Calu3 (cell line): ENCODE measurements at regions of chr2 and their contacts with region 1.

Region 1: GRCh38 chr2:67322353-67323001 is 74.7 kb upstream of the ETAA1 start:
- DNase-seq: peak; percentile 73
- H3K4me3 Mint-ChIP-seq: peak overlapping the region; percentile 12
- H3K27ac Mint-ChIP-seq: peak overlapping the region; percentile 87
- H3K4me1 Mint-ChIP-seq: peaks cover 29% of the 10 kb centered on the region
- H3K27me3 Mint-ChIP-seq: no peaks in the 10 kb centered on the region
- CTCF ChIP-seq: peak; percentile 71

Region 2: GRCh38 chr2:66434679-66435548 is 887.6 kb before region 1 on chr2 and contains the start of gene MEIS1:
- CTCF ChIA-PET with region 1: no interaction called
- intact Hi-C with region 1: loop called (anchors 10 kb)
- DNase-seq: peak; percentile 89
- H3K4me3 Mint-ChIP-seq: peak within 1 kb of the TSS; percentile 74
- H3K27ac Mint-ChIP-seq: peak within 1 kb of the TSS; percentile 75
- H3K4me1 Mint-ChIP-seq: peaks cover 19% of the 10 kb centered on the region
- H3K27me3 Mint-ChIP-seq: no peaks in the 10 kb centered on the region
- CTCF ChIP-seq: no peak
- total RNA-seq, gene MEIS1: 8.1 and 11.5 TPM in 2 replicates

Region 3: DNA sequence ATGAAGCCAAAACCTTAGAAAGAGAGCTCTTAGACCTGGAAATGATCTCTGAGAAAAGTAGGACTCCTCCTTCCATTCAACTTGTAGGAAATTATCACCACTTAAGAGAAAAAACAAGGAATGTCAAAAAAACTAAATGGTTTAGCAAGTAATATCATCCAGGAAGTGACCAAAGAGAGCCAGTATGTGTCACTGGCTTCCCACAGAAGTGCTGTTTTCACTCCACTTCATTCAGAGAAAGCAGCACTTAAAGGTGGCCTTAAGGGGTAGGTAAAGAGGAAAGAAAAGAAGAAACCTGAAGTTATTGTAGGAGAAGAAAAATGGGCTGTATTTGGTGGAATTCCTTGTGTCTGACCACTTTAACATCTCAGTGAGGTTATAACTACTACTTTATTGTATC is 339.7 kb before region 1 on chr2:
- CTCF ChIA-PET with region 1: no interaction called
- intact Hi-C with region 1: loop called (anchors 10 kb)
- DNase-seq: no peak
- H3K4me3 Mint-ChIP-seq: no peak overlapping the region
- H3K27ac Mint-ChIP-seq: no peak overlapping the region
- H3K4me1 Mint-ChIP-seq: no peaks in the 10 kb centered on the region
- H3K27me3 Mint-ChIP-seq: no peaks in the 10 kb centered on the region
- CTCF ChIP-seq: no peak

Region 4: DNA sequence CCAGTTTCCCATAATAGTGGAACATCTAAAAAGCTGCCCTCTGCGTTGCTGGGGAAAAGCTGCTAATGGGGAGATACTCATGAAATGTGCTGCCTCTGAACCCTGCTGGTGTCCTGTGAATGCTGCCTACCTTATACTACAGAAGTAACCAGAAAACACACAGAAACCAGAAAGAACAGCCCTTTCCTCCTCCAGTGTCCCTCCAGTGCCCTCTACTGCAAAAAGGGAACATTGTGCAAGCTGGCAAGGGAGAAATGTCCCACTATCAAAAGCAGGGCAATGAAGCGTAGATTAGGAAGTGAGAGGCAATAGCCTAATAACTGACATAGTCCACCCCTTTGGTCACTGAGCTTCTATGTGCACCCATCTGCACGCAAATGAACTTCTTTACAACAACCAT is 88.0 kb before region 1 on chr2:
- CTCF ChIA-PET with region 1: no interaction called
- intact Hi-C with region 1: loop called (anchors 2 kb)
- DNase-seq: peak; percentile 22
- H3K4me3 Mint-ChIP-seq: no peak overlapping the region
- H3K27ac Mint-ChIP-seq: no peak overlapping the region
- H3K4me1 Mint-ChIP-seq: peaks cover 33% of the 10 kb centered on the region
- H3K27me3 Mint-ChIP-seq: no peaks in the 10 kb centered on the region
- CTCF ChIP-seq: peak; percentile 28

Region 5: DNA sequence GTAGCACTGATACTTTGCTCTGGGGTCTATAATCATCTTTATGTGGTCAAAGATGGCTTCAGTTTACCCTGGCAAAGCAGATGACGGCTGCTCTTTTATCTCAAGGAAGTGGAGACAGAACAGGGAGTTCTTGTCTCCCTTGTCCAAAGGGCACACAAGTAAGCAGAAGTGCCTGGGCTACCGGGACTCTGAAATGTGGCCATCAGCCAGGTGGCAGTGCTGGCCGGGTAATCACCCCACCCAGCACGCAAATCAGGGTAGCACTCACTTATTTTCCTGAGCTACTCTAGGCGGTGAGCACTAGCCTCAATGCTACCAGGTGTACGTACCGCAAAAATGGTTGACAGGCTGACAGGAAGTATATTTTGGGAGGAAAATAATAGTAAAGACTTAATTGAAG is 45.0 kb before region 1 on chr2:
- CTCF ChIA-PET with region 1: no interaction called
- intact Hi-C with region 1: loop called (anchors 1 kb)
- DNase-seq: peak; percentile 55
- H3K4me3 Mint-ChIP-seq: no peak overlapping the region
- H3K27ac Mint-ChIP-seq: peak overlapping the region; percentile 86
- H3K4me1 Mint-ChIP-seq: peaks cover 13% of the 10 kb centered on the region
- H3K27me3 Mint-ChIP-seq: no peaks in the 10 kb centered on the region
- CTCF ChIP-seq: no peak

Region 6: DNA sequence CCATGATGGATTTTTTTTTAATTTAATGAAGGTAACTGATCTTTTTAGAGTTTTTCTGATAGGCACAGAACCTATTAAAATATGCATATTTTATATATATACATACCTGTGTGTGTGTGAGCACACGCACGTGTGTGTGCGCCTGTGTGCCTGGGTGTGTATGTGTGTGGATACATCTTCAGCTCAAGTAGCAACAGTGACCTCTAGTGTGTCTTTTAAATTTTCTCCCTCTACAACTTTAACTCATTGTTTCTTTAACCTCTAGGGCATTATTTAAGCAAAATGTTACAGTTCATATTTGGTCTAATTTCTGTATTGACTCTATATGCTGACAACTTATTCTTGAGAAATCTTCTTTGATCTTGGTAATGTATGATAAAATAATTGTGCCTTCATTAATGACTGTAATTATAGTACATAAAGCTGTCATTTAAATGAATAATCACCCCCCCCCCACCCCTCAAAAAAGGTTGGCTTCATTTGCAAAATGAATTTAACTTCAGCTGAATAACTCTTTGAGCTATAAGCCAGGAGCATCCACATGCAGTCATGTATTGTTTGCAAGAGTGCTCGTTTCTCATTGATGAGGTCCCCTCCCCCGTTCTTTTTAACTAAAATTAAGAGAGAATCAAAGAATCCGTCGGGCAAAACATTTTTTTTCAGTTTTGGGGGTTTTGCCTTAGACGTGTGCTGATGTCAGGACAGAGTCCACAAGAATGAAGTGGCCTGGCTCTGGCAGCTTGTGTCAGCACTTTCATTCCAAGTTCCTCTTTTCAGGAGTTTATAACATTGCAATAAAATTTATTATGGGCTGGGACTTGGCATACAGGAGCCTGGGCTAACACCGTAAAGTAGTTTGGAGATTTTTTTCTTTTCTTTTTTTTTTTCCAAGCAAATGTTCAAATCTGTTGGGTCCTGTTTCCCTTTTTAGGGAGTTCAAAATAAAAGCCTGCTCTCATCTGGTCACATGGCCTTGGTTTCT is 154.6 kb after region 1 on chr2:
- CTCF ChIA-PET with region 1: no interaction called
- intact Hi-C with region 1: loop called (anchors 1 kb)
- DNase-seq: peak; percentile 6
- H3K4me3 Mint-ChIP-seq: no peak overlapping the region
- H3K27ac Mint-ChIP-seq: no peak overlapping the region
- H3K4me1 Mint-ChIP-seq: no peaks in the 10 kb centered on the region
- H3K27me3 Mint-ChIP-seq: no peaks in the 10 kb centered on the region
- CTCF ChIP-seq: peak; percentile 67

Region 7: DNA sequence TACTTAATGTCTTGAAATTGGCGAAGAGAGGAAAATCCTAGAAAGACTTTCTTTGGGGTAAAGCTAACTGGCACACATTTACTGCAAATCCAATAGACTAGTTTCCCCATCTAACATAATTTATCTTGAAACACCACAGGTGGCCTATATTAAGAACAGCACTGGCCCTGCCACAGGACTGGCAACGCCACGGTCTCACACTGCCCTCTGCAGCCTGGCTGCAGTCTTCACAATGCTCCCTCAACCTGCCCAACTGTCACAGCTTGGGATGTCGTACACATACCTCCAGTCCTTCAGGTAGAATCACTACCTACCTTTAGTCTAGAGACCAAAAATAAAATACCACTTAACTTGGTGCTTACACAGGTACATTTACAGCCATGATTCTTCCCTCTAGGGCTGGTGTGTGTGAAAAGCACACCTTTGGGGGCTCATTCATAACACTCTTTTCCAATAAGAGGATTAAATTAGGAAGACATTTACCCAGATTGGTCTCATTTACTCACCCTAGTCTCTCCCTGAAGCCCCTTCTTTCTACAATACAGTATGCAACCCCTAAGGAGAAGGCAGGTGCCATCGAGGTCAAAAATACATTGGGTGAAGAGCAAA is 518.1 kb after region 1 on chr2:
- CTCF ChIA-PET with region 1: no interaction called
- intact Hi-C with region 1: loop called (anchors 10 kb)
- DNase-seq: peak; percentile 82
- H3K4me3 Mint-ChIP-seq: no peak overlapping the region
- H3K27ac Mint-ChIP-seq: no peak overlapping the region
- H3K4me1 Mint-ChIP-seq: peaks cover 11% of the 10 kb centered on the region
- H3K27me3 Mint-ChIP-seq: no peaks in the 10 kb centered on the region
- CTCF ChIP-seq: peak; percentile 63